ENCODE measurements at regions of chr9 and their contacts with region 1.

Region 1: GRCh38 chr9:132575005-132575609 is 7.3 kb upstream of the BARHL1 start:
- DNase-seq: peak; percentile 62
- ATAC-seq: peak; percentile 96
- H3K4me3 ChIP-seq: no peak overlapping the region
- H3K27ac ChIP-seq: no peak overlapping the region
- H3K4me1 ChIP-seq: peaks cover 0 to 6% of the 10 kb centered on the region in 2 experiments; a peak in 2 of 4 replicates
- H3K27me3 ChIP-seq: peaks cover 20% of the 10 kb centered on the region
- CTCF ChIP-seq: peak; percentile 78 to 90 (median 86)
- POLR2A ChIP-seq: no peak
- RAD21 ChIP-seq: peak; percentile 96

Region 2: DNA sequence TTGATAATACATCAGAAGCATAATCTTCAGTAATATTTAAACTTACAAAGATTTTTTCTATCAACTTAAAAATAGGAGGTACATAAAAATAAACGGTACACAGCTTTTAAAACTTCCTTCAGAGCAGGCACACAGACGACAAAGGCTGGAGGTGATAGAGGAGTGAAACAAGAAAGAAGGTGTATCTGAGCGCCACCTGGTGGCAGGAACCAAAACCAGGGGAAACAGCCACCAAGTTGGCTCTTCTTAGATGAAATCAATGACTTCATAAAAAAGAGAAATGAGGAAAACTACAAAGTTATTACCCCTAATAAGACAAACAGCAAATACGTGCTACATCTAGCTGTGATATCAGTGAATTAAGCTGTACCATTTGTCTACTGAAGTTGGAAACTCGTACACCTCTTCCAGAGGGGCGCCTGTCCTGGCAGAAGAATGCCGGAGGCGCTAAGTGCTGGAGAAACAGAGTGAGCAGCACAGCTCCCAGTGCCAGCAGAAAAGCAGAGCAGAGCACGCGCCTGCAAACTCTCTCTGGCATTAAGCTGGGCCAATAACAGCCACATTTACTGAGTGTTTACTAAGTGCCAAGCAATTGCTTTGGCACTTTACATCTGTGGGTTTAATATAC is 306.3 kb before region 1 on chr9:
- CTCF ChIA-PET with region 1: no interaction called
- POLR2A ChIA-PET with region 1: no interaction called
- RAD21 ChIA-PET with region 1: no interaction called
- intact Hi-C with region 1: loop called (anchors 10 kb)
- DNase-seq: peak; percentile 43
- ATAC-seq: peak; percentile 83
- H3K4me3 ChIP-seq: no peak overlapping the region
- H3K27ac ChIP-seq: peak overlapping the region; percentile 97; the same call in 1 of the 2 replicates
- H3K4me1 ChIP-seq: peaks cover 9 to 29% of the 10 kb centered on the region in 2 experiments; a peak in 3 of 4 replicates
- H3K27me3 ChIP-seq: no peaks in the 10 kb centered on the region
- CTCF ChIP-seq: peak; percentile 44 to 96 (median 87); a peak in 5 of 6 replicates
- POLR2A ChIP-seq: no peak
- RAD21 ChIP-seq: peak; percentile 49

Region 3: DNA sequence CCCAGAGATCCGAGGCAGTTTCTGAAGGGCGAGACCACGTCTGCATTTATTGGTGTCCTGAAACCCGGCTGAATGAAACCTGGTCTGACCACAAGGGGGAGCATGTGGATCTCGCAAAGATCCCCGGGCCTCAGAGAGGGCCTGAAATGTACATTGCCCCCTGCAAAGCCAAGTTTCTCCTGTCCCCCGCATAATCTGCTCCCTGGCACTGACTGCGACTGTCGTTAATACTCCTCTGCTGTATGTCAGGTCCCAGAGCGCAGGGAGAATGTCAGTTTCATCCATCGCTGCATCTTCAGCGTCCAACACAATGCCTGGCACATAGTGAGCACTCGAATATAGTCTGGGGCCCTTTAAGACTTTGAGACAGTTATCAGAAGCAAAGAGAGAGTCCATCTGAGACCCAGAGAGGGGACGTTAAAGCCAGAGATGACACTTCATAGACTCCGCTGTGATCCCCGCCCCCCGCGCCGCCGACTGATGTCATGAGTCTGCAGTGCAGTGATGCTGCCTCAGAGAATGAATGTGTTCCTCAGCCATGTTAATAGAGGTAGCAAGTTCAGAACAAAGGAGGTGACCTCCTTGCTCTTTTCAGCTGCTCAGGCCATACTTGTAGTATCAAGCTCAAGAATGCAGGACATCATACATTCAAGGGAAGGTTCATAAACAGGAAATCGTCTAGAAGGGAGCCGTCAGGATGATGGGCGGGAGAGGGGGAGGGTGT is 67.2 kb before region 1 on chr9:
- CTCF ChIA-PET with region 1: interaction called, 4 read pairs
- POLR2A ChIA-PET with region 1: no interaction called
- RAD21 ChIA-PET with region 1: no interaction called
- intact Hi-C with region 1: loop called (anchors 1 kb)
- DNase-seq: peak; percentile 37
- ATAC-seq: peak; percentile 96
- H3K4me3 ChIP-seq: no peak overlapping the region
- H3K27ac ChIP-seq: no peak overlapping the region
- H3K4me1 ChIP-seq: no peaks in the 10 kb centered on the region
- H3K27me3 ChIP-seq: no peaks in the 10 kb centered on the region; the same call in 1 of the 2 replicates
- CTCF ChIP-seq: peak; percentile 83 to 84 (median 84); a peak in 5 of 6 replicates
- POLR2A ChIP-seq: no peak
- RAD21 ChIP-seq: peak; percentile 82

Measured in HCT116 (cell line).